ENCODE measurements at regions of chr13 and their contacts with region 1.

Region 1: GRCh38 chr13:110347535-110348308 is 40.6 kb downstream of the COL4A2 start:
- DNase-seq: peak; percentile 99
- H3K4me3 ChIP-seq: no peak overlapping the region
- H3K27ac ChIP-seq: peak overlapping the region; percentile 74
- H3K4me1 ChIP-seq: peaks cover 62% of the 10 kb centered on the region
- H3K27me3 ChIP-seq: no peaks in the 10 kb centered on the region
- CTCF ChIP-seq: no peak

Region 2: GRCh38 chr13:110319774-110320509 is 27.8 kb before region 1 on chr13:
- CTCF ChIA-PET with region 1: no interaction called
- dilution Hi-C with region 1: no loop called
- in situ Hi-C with region 1: no loop called
- intact Hi-C with region 1: loop called (anchors 1 kb)
- DNase-seq: peak; percentile 78
- H3K4me3 ChIP-seq: peak overlapping the region; percentile 35 to 44 (median 38)
- H3K27ac ChIP-seq: peak overlapping the region; percentile 70
- H3K4me1 ChIP-seq: peaks cover 17% of the 10 kb centered on the region
- H3K27me3 ChIP-seq: no peaks in the 10 kb centered on the region
- CTCF ChIP-seq: no peak

Region 3: GRCh38 chr13:110387391-110388107 is 39.8 kb after region 1 on chr13:
- CTCF ChIA-PET with region 1: interaction called, 4 read pairs
- dilution Hi-C with region 1: no loop called
- in situ Hi-C with region 1: loop called in 1 of 2 experiments (anchors 10 kb)
- intact Hi-C with region 1: loop called (anchors 2 kb)
- DNase-seq: peak; percentile 53
- H3K4me3 ChIP-seq: peak overlapping the region in 2 of 3 experiments; percentile 27 to 31
- H3K27ac ChIP-seq: peak overlapping the region; percentile 64
- H3K4me1 ChIP-seq: peaks cover 18% of the 10 kb centered on the region
- H3K27me3 ChIP-seq: no peaks in the 10 kb centered on the region
- CTCF ChIP-seq: no peak

Region 4: DNA sequence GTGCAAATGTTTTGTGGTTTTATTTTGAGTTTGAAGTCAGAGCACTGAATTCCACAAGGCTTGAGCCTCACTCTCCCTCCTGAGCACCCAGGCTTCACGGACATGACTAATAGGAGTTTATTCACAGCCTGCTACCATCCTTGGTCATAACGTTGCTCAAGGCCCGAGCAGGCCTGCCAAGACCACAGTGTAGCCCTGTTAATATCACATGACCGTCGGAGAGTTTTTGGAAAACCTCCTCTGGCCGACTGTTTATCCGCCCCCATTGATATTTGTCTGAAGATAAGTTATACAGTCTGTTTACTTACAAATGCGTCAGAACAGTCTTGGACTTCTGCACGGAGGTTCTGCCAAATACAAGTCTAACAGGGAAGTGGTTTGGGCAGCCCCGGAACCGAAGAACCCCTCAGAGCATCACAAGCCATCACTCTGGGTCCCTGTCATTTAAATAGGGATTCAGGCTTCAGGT is 49.2 kb after region 1 on chr13:
- CTCF ChIA-PET with region 1: no interaction called
- dilution Hi-C with region 1: no loop called
- in situ Hi-C with region 1: loop called in 1 of 2 experiments (anchors 10 kb)
- intact Hi-C with region 1: loop called (anchors 2 kb)
- DNase-seq: peak; percentile 97
- H3K4me3 ChIP-seq: peak overlapping the region; percentile 7 to 16 (median 11)
- H3K27ac ChIP-seq: peak overlapping the region; percentile 81
- H3K4me1 ChIP-seq: peaks cover 24% of the 10 kb centered on the region
- H3K27me3 ChIP-seq: no peaks in the 10 kb centered on the region
- CTCF ChIP-seq: no peak

Measured in mammary epithelial cell (primary cell).